ENCODE measurements at regions of chr9 and their contacts with region 1.

Region 1: DNA sequence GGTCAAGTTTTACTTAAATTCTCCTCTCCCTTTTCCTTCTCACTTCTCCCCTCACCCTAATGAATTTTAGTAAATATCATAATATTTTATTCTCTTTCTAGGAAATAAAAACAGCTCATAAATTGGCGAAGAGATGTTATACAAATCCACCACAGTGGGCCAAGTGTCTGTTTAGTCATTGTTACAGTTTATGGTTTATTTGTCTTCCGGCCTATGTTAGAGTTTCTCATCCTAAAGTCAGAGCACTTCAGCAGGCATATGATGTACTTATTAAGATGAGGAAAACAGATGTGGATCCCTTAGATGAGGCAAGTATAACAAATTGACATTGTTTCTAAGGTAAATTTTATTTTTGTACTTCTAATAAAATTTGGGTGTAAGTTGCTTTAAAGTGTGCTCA is 48.2 kb downstream of the RPS6 start:
- DNase-seq: no peak
- ATAC-seq: no peak
- H3K4me3 ChIP-seq: no peak overlapping the region
- H3K27ac ChIP-seq: no peak overlapping the region
- H3K4me1 ChIP-seq: no peaks in the 10 kb centered on the region
- H3K27me3 ChIP-seq: no peaks in the 10 kb centered on the region
- CTCF ChIP-seq: no peak
- POLR2A ChIP-seq: no peak

Region 2: GRCh38 chr9:19342947-19343346 is 11.1 kb after region 1 on chr9:
- intact Hi-C with region 1: loop called in 1 of 10 experiments (anchors 1 kb)
- DNase-seq: no peak
- ATAC-seq: peak in 1 of 4 donors; percentile 47
- H3K4me3 ChIP-seq: no peak overlapping the region
- H3K27ac ChIP-seq: no peak overlapping the region
- H3K4me1 ChIP-seq: peaks cover 0 to 2% (median 0%) of the 10 kb centered on the region in 12 donors
- H3K27me3 ChIP-seq: no peaks in the 10 kb centered on the region
- CTCF ChIP-seq: no peak
- POLR2A ChIP-seq: no peak

Region 3: GRCh38 chr9:19379697-19380046 is 47.8 kb after region 1 on chr9:
- intact Hi-C with region 1: no loop called
- DNase-seq: no peak
- ATAC-seq: peak; percentile 29 to 64 (median 62)
- H3K4me3 ChIP-seq: peak overlapping the region; percentile 44 to 86 (median 75)
- H3K27ac ChIP-seq: peak overlapping the region; percentile 64 to 97 (median 91)
- H3K4me1 ChIP-seq: peaks cover 0 to 38% (median 18%) of the 10 kb centered on the region in 12 donors
- H3K27me3 ChIP-seq: no peaks in the 10 kb centered on the region
- CTCF ChIP-seq: peak in 1 of 12 donors; percentile 6
- POLR2A ChIP-seq: no peak

Measured in heart left ventricle (tissue), 16 donors.